ENCODE measurements at regions of chr2 and their contacts with region 1.

Region 1: GRCh38 chr2:177464549-177464948 is 72.0 kb downstream of the AGPS start:
- DNase-seq: no peak
- CTCF ChIP-seq: no peak

Region 2: GRCh38 chr2:177448031-177448430 is 16.5 kb before region 1 on chr2:
- CTCF ChIA-PET with region 1: no interaction called
- POLR2A ChIA-PET with region 1: no interaction called
- DNase-seq: no peak
- CTCF ChIP-seq: no peak

Region 3: GRCh38 chr2:177474998-177475397 is 10.4 kb after region 1 on chr2:
- CTCF ChIA-PET with region 1: interaction called, 13 read pairs
- POLR2A ChIA-PET with region 1: no interaction called
- DNase-seq: no peak
- CTCF ChIP-seq: no peak